Tibial artery (tissue), 4 donors: ENCODE measurements at regions of chr10 and their contacts with region 1.

Region 1: DNA sequence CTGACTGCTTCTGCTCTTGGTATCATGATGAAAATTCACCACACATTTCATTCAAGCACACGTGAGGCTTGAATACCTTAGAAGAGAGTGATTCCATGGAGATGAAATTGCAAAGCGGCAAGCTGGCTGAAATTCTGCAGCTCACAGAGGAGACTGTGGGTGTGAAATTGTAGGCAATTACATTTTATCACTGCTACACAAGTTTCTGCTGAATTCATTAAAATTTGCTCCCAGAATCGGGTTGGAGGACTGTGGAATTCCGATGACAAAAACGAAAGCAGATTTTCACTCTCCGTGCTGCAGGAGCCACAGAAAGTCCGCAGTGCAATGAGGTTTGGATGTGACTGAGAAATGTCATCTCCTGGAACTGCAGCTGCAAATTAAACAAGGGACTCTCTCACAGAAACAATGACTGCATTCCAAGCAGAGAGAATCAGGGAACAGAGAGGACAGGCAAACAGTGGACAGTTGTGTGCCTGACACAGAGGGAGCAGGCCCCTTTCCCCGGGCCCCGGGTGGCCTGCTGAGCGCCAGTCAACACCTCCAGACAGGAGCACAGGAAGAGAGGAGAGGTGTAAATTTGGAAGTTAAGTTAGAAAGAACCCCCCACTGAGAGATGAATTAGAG is 109.1 kb downstream of the C10orf90 start:
- DNase-seq: no peak
- H3K4me3 ChIP-seq: peak overlapping the region; percentile 8 to 24
- H3K27ac ChIP-seq: no peak overlapping the region
- H3K4me1 ChIP-seq: no peaks in the 10 kb centered on the region
- H3K27me3 ChIP-seq: no peaks in the 10 kb centered on the region
- CTCF ChIP-seq: no peak

Region 2: GRCh38 chr10:126074746-126075408 is 486.5 kb before region 1 on chr10:
- intact Hi-C with region 1: loop called (anchors 5 kb)
- DNase-seq: no peak
- H3K4me3 ChIP-seq: no peak overlapping the region
- H3K27ac ChIP-seq: no peak overlapping the region
- H3K4me1 ChIP-seq: no peaks in the 10 kb centered on the region
- H3K27me3 ChIP-seq: no peaks in the 10 kb centered on the region
- CTCF ChIP-seq: no peak